GM12878 (cell line): ENCODE measurements at regions of chr20 and their contacts with region 1.

Region 1: DNA sequence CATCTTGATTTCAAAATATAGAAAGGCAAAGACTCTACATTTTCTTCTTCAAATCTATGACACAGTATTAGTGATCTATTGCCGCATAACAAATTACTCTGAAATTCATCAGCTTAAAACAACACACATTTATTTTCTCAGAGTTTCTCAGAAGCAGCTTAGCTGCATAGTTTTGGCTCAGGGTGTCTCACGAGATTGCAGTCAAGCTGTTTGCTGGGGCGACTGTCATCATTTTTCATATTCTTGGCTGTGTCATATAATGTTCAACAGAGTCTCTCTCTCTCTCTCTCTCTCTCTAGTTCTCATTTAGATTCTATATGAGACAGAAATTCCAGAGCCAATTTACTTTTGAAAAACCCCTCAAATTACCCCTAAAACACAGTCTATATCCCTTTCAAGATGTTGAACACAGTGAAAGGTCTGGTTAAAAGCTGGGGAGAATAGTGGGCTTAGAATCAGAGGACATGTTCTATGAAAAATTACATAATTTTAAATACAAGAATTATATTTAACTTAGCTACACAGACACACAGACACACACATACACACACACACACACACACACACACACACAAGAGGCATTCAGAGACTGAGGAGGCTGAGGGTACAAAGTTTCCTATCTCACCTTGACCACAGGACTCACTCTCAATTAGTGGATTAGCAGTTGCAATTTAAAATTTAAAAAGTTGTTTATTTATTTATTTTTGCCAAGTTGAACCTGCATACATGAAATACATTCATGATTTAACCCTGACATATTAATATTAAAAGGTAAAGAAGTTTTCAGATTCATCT is 86.7 kb downstream of the MKKS start:
- DNase-seq: no peak
- ATAC-seq: no peak
- H3K4me3 ChIP-seq: no peak overlapping the region
- H3K27ac ChIP-seq: no peak overlapping the region
- H3K4me1 ChIP-seq: peaks cover 12% of the 10 kb centered on the region
- H3K27me3 ChIP-seq: no peaks in the 10 kb centered on the region
- CTCF ChIP-seq: no peak
- EP300 ChIP-seq: no peak
- POLR2A ChIP-seq: no peak
- RAD21 ChIP-seq: no peak

Region 2: GRCh38 chr20:10336959-10337728 is 10.1 kb before region 1 on chr20:
- CTCF ChIA-PET with region 1: interaction called, 3 read pairs
- POLR2A ChIA-PET with region 1: interaction called, 6 read pairs
- RAD21 ChIA-PET with region 1: interaction called, 4 read pairs
- SMC1A ChIA-PET with region 1: interaction called, 35 read pairs
- in situ Hi-C with region 1: no loop called
- intact Hi-C with region 1: no loop called
- DNase-seq: no peak
- ATAC-seq: peak; percentile 85
- H3K4me3 ChIP-seq: no peak overlapping the region
- H3K27ac ChIP-seq: no peak overlapping the region
- H3K4me1 ChIP-seq: no peaks in the 10 kb centered on the region
- H3K27me3 ChIP-seq: peaks cover 0 to 2% of the 10 kb centered on the region in 2 experiments; a peak in 1 of 4 replicates
- CTCF ChIP-seq: no peak
- EP300 ChIP-seq: no peak; a peak in 1 of 4 replicates
- POLR2A ChIP-seq: no peak
- RAD21 ChIP-seq: no peak

Region 3: DNA sequence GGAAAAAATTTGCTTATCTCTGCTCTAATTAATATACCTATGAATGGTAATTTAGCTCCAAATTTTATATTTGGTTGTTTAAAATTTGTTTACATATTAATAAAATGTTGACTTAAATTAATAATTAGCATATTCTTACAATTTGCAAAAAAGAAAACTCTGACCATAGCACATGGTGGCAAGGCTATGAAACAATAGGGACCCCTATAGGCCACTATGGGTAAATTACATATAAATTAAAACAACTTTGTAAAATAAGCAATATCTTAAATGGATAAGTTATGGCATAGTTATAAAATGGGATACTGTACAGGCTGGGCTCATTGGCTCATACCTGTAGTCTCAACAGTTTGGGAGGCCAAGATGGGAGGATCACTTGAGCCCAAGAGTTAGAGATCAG is 10.7 kb after region 1 on chr20:
- CTCF ChIA-PET with region 1: interaction called, 12 read pairs
- POLR2A ChIA-PET with region 1: interaction called, 24 read pairs
- RAD21 ChIA-PET with region 1: interaction called, 86 read pairs
- SMC1A ChIA-PET with region 1: interaction called, 103 read pairs
- in situ Hi-C with region 1: no loop called
- intact Hi-C with region 1: no loop called
- DNase-seq: no peak
- ATAC-seq: no peak
- H3K4me3 ChIP-seq: no peak overlapping the region
- H3K27ac ChIP-seq: no peak overlapping the region
- H3K4me1 ChIP-seq: no peaks in the 10 kb centered on the region
- H3K27me3 ChIP-seq: no peaks in the 10 kb centered on the region
- CTCF ChIP-seq: no peak
- EP300 ChIP-seq: no peak
- POLR2A ChIP-seq: no peak
- RAD21 ChIP-seq: no peak